IMR-90 (cell line): ENCODE measurements at regions of chr2 and their contacts with region 1.

Region 1: DNA sequence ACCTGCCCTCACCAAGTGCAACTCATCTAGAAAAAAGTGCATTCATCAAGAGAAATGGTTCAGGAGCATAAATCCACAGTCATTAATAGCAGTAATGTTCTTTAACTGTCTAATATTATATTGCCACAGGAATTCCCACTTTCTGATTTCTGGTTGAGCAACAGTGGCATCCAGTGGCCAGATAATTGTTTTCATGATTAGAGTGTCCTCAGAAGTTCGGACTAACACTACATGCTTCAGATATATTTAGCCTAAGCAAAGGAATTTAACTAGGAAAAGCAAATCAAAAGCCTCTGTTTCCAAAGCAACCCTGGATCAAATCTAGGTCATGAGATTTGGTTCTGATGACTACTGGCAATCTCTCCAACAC is 9.8 kb upstream of the ERBB4 start:
- DNase-seq: peak; percentile 28
- ATAC-seq: peak; percentile 70; the same call in 1 of the 2 replicates
- H3K4me3 ChIP-seq: no peak overlapping the region
- H3K27ac ChIP-seq: no peak overlapping the region
- H3K4me1 ChIP-seq: no peaks in the 10 kb centered on the region
- H3K27me3 ChIP-seq: no peaks in the 10 kb centered on the region
- CTCF ChIP-seq: peak; percentile 57
- POLR2A ChIP-seq: no peak
- RAD21 ChIP-seq: peak; percentile 57

Region 2: DNA sequence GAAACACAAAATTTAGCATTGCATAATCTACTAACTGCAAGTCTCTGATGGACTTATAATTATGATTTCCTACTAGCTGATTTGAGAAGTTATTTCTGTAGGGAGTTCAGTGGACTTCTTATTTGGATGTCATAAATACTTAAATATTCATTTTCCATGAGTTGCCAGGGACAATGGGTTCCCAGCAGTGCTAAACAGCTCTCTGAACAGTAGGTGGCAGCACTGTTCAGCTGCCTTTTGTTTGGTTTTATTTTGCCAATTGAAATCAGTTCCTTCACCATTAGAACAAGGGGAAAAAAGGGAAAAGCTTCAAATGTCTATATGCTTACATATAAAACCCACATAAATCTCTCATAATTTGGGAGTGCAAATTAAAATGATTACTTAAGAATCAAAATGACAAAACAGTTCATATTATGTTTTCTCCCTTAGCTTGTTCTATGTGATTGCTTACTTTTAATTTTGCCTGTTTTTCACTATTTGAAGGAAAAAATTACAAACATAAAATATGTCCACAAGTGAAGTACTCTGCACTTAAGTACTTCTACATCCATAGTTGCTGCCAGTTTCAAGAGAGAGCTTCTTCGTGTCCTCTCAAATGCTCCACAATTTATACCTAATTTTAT is 1093.1 kb before region 1 on chr2:
- CTCF ChIA-PET with region 1: interaction called, 3 read pairs
- POLR2A ChIA-PET with region 1: no interaction called
- dilution Hi-C with region 1: no loop called
- in situ Hi-C with region 1: no loop called
- intact Hi-C with region 1: loop called (anchors 1 kb)
- DNase-seq: peak; percentile 22
- ATAC-seq: peak; percentile 75; the same call in 1 of the 2 replicates
- H3K4me3 ChIP-seq: no peak overlapping the region
- H3K27ac ChIP-seq: no peak overlapping the region
- H3K4me1 ChIP-seq: no peaks in the 10 kb centered on the region
- H3K27me3 ChIP-seq: no peaks in the 10 kb centered on the region
- CTCF ChIP-seq: peak; percentile 72
- POLR2A ChIP-seq: no peak
- RAD21 ChIP-seq: peak; percentile 36; the same call in 1 of the 2 replicates

Region 3: DNA sequence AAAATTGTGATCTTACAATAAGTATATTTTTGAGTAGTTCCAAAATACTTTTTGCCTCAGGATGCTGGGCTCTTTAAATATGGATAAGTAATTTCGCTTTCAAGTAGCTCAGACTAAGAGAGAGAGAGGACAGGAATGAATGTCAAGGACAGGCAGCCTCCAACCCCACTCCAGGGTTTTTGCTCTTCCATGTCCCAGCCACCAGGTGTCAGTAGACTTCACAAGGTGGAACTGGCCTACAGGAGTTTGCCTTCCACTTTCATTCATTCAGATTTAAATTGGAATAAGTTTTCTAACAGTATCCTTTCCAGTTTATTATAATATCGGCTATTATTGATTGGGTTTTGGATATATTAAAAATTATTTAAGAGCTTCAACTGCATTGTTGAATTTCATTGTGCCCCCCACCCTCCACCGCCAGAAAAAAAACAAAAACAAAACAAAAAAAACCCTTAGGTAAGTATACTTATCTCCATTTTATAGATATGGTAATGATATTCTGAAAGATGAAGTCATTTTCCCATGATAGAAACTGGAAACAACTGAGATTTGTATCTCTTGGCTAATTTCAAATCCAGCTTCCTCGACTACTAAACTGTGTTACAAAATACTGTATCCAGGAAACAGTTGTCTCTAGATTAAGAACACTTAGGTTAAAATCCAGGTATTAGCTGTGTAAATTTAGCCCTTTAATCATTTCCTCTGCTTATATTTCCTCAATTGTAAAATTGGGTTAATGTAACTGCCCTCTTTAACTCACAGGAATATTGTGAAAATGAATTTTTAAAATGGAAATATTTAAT is 802.9 kb before region 1 on chr2:
- CTCF ChIA-PET with region 1: interaction called, 3 read pairs
- POLR2A ChIA-PET with region 1: no interaction called
- dilution Hi-C with region 1: no loop called
- in situ Hi-C with region 1: loop called (anchors 10 kb)
- intact Hi-C with region 1: loop called (anchors 1 kb)
- DNase-seq: peak; percentile 49
- ATAC-seq: peak; percentile 85
- H3K4me3 ChIP-seq: no peak overlapping the region
- H3K27ac ChIP-seq: no peak overlapping the region
- H3K4me1 ChIP-seq: no peaks in the 10 kb centered on the region
- H3K27me3 ChIP-seq: no peaks in the 10 kb centered on the region
- CTCF ChIP-seq: peak; percentile 90
- POLR2A ChIP-seq: no peak
- RAD21 ChIP-seq: peak; percentile 93

Region 4: GRCh38 chr2:211751848-211752247 is 796.6 kb before region 1 on chr2:
- CTCF ChIA-PET with region 1: no interaction called
- POLR2A ChIA-PET with region 1: no interaction called
- dilution Hi-C with region 1: no loop called
- in situ Hi-C with region 1: loop called (anchors 10 kb)
- intact Hi-C with region 1: no loop called
- DNase-seq: no peak
- ATAC-seq: no peak
- H3K4me3 ChIP-seq: no peak overlapping the region
- H3K27ac ChIP-seq: no peak overlapping the region
- H3K4me1 ChIP-seq: no peaks in the 10 kb centered on the region
- H3K27me3 ChIP-seq: no peaks in the 10 kb centered on the region
- CTCF ChIP-seq: no peak
- POLR2A ChIP-seq: no peak
- RAD21 ChIP-seq: no peak

Region 5: GRCh38 chr2:212381428-212382102 is 166.9 kb before region 1 on chr2:
- CTCF ChIA-PET with region 1: no interaction called
- POLR2A ChIA-PET with region 1: no interaction called
- dilution Hi-C with region 1: no loop called
- in situ Hi-C with region 1: no loop called
- intact Hi-C with region 1: no loop called
- DNase-seq: no peak
- ATAC-seq: no peak
- H3K4me3 ChIP-seq: no peak overlapping the region
- H3K27ac ChIP-seq: no peak overlapping the region
- H3K4me1 ChIP-seq: no peaks in the 10 kb centered on the region
- H3K27me3 ChIP-seq: no peaks in the 10 kb centered on the region
- CTCF ChIP-seq: no peak
- POLR2A ChIP-seq: no peak
- RAD21 ChIP-seq: no peak